ENCODE measurements at regions of chr4 and their contacts with region 1.

Region 1: GRCh38 chr4:15001869-15002658 is at the start of gene CPEB2:
- DNase-seq: peak; percentile 68 to 95
- H3K4me3 ChIP-seq: peak within 1 kb of the TSS; percentile 90
- H3K27ac ChIP-seq: peak within 1 kb of the TSS; percentile 82
- H3K4me1 ChIP-seq: peaks cover 22% of the 10 kb centered on the region; the same call in 1 of the 2 replicates
- H3K27me3 ChIP-seq: no peaks in the 10 kb centered on the region
- CTCF ChIP-seq: no peak
- total RNA-seq, gene CPEB2: 9.3 and 9.4 TPM in 2 replicates

Region 2: GRCh38 chr4:13654158-13654797 is 1347.8 kb before region 1 on chr4:
- CTCF ChIA-PET with region 1: no interaction called
- POLR2A ChIA-PET with region 1: no interaction called
- intact Hi-C with region 1: loop called (anchors 5 kb)
- DNase-seq: peak; percentile 50 to 82
- H3K4me3 ChIP-seq: peak overlapping the region; percentile 69
- H3K27ac ChIP-seq: no peak overlapping the region
- H3K4me1 ChIP-seq: peaks cover 20% of the 10 kb centered on the region
- H3K27me3 ChIP-seq: no peaks in the 10 kb centered on the region
- CTCF ChIP-seq: peak; percentile 83

Region 3: DNA sequence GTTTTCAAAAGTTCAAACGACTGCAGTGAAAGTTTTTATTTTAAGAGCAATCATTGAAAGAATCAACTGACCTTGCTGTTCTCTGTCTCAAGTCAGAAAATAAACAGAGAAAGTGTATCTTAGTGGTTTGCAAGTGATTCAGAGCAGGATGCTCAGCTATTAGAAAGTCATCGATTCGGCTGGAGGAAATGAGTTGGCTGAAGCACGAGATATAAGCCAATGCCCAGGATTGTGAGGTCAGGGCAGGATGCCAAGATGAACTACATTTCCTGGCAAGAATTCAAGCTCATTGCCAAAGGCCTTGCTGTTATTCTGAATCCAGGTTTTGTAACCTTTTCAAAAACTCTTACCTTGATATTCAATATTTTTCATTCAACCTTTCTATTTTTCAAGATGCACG is 833.1 kb before region 1 on chr4:
- CTCF ChIA-PET with region 1: no interaction called
- POLR2A ChIA-PET with region 1: no interaction called
- intact Hi-C with region 1: loop called (anchors 5 kb)
- DNase-seq: peak; percentile 77 to 93
- H3K4me3 ChIP-seq: peak overlapping the region; percentile 41; the same call in 1 of the 2 replicates
- H3K27ac ChIP-seq: peak overlapping the region; percentile 99
- H3K4me1 ChIP-seq: peaks cover 37% of the 10 kb centered on the region
- H3K27me3 ChIP-seq: no peaks in the 10 kb centered on the region
- CTCF ChIP-seq: no peak

Region 4: DNA sequence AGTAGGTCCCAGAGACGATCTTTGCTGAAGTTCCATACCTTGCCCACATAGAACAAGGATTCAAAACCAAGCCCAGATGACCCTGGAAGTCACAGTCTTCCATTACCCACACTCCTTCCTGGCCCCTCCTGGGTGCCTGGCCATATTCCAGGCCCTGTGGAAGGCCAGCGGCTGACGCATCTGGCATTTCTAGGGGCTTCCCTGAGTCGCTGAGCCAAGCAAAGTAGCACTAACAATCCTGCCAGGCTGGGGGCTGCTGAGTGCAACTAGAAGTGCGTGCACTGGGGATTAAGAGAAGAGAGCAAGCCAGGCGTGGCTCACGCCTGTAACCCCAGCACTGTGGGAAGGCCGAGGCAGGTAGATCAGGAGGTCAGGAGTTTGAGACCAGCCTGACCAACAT is 175.0 kb before region 1 on chr4:
- CTCF ChIA-PET with region 1: no interaction called
- POLR2A ChIA-PET with region 1: no interaction called
- intact Hi-C with region 1: no loop called
- DNase-seq: no peak
- H3K4me3 ChIP-seq: no peak overlapping the region
- H3K27ac ChIP-seq: no peak overlapping the region
- H3K4me1 ChIP-seq: peaks cover 4% of the 10 kb centered on the region; the same call in 1 of the 2 replicates
- H3K27me3 ChIP-seq: no peaks in the 10 kb centered on the region
- CTCF ChIP-seq: no peak

Region 5: GRCh38 chr4:14856076-14856933 is 145.8 kb before region 1 on chr4:
- CTCF ChIA-PET with region 1: no interaction called
- POLR2A ChIA-PET with region 1: no interaction called
- intact Hi-C with region 1: loop called (anchors 1 kb)
- DNase-seq: peak; percentile 77 to 94
- H3K4me3 ChIP-seq: no peak overlapping the region
- H3K27ac ChIP-seq: peak overlapping the region; percentile 72
- H3K4me1 ChIP-seq: peaks cover 18% of the 10 kb centered on the region
- H3K27me3 ChIP-seq: no peaks in the 10 kb centered on the region
- CTCF ChIP-seq: no peak

Region 6: DNA sequence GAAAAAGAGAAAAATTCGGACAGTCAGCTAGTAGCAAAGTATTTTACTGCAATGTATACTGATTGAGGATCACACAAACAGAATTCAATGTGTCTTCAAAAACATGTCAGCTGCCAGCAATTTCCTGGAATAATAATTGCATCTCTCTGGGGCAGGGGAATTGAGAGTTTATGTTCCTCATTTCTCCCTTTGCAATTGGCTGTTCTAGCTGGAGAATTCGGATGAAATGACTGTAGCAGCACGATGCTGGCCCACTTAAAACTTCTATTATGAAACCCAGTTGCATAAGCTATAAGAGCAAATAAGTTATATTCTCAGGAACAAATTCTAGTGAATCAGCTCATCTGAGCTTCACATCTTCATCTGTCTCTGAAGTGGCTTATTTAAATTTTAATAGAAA is 99.7 kb before region 1 on chr4:
- CTCF ChIA-PET with region 1: no interaction called
- POLR2A ChIA-PET with region 1: no interaction called
- intact Hi-C with region 1: no loop called
- DNase-seq: no peak
- H3K4me3 ChIP-seq: no peak overlapping the region
- H3K27ac ChIP-seq: no peak overlapping the region
- H3K4me1 ChIP-seq: no peaks in the 10 kb centered on the region
- H3K27me3 ChIP-seq: no peaks in the 10 kb centered on the region
- CTCF ChIP-seq: no peak

Region 7: GRCh38 chr4:14916554-14917297 is 85.3 kb before region 1 on chr4:
- CTCF ChIA-PET with region 1: no interaction called
- POLR2A ChIA-PET with region 1: no interaction called
- intact Hi-C with region 1: loop called (anchors 2 kb)
- DNase-seq: peak; percentile 65 to 82
- H3K4me3 ChIP-seq: no peak overlapping the region; the same call in 1 of the 2 replicates
- H3K27ac ChIP-seq: peak overlapping the region; percentile 86
- H3K4me1 ChIP-seq: peaks cover 22% of the 10 kb centered on the region
- H3K27me3 ChIP-seq: no peaks in the 10 kb centered on the region
- CTCF ChIP-seq: no peak

Region 8: DNA sequence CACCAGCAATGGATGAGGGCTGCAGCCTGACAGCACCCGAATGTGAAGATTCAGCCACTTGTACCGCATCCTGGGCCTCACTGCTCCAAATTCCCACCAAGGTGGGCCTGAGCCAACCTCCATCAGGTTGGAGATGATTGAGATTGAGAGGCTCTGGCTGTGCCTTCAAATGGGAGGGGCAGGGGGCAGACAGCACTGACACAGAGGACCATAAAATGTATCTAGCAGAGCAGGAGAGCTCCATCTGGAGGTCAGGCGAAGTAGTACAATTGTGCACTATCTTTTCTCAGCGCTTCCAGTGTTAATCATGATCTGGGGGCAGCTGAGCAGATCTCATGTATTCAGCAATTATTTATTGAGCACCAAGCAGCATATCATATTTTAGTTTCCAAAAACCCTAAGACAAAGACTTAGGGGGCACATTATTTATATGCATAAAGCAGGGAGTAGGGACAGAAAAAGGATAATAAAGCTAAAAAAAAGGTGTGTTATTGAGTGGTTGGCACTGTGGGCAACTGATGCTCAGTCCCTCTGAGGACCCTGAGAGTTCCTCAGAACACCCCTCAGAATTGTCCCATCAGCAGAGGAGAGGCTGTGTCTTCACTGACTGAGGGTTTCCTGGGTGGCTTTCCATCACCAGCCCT is 394.2 kb after region 1 on chr4:
- CTCF ChIA-PET with region 1: no interaction called
- POLR2A ChIA-PET with region 1: no interaction called
- intact Hi-C with region 1: loop called (anchors 10 kb)
- DNase-seq: no peak
- H3K4me3 ChIP-seq: no peak overlapping the region
- H3K27ac ChIP-seq: no peak overlapping the region
- H3K4me1 ChIP-seq: peaks cover 10% of the 10 kb centered on the region; the same call in 1 of the 2 replicates
- H3K27me3 ChIP-seq: no peaks in the 10 kb centered on the region
- CTCF ChIP-seq: peak; percentile 61

Measured in PC-9 (cell line).